Colonic mucosa (tissue), 4 donors: ENCODE measurements at regions of chr7 and their contacts with region 1.

Region 1: GRCh38 chr7:95476904-95477594 is 8.7 kb upstream of the ASB4 start:
- DNase-seq: peak; percentile 74
- H3K4me3 ChIP-seq: no peak overlapping the region
- H3K27ac ChIP-seq: no peak overlapping the region
- H3K4me1 ChIP-seq: no peaks in the 10 kb centered on the region
- H3K27me3 ChIP-seq: no peaks in the 10 kb centered on the region
- CTCF ChIP-seq: peak; percentile 62

Region 2: GRCh38 chr7:95276114-95276513 is 200.9 kb before region 1 on chr7:
- intact Hi-C with region 1: loop called (anchors 10 kb)
- DNase-seq: no peak
- H3K4me3 ChIP-seq: no peak overlapping the region
- H3K27ac ChIP-seq: no peak overlapping the region
- H3K4me1 ChIP-seq: no peaks in the 10 kb centered on the region
- H3K27me3 ChIP-seq: no peaks in the 10 kb centered on the region
- CTCF ChIP-seq: no peak

Region 3: DNA sequence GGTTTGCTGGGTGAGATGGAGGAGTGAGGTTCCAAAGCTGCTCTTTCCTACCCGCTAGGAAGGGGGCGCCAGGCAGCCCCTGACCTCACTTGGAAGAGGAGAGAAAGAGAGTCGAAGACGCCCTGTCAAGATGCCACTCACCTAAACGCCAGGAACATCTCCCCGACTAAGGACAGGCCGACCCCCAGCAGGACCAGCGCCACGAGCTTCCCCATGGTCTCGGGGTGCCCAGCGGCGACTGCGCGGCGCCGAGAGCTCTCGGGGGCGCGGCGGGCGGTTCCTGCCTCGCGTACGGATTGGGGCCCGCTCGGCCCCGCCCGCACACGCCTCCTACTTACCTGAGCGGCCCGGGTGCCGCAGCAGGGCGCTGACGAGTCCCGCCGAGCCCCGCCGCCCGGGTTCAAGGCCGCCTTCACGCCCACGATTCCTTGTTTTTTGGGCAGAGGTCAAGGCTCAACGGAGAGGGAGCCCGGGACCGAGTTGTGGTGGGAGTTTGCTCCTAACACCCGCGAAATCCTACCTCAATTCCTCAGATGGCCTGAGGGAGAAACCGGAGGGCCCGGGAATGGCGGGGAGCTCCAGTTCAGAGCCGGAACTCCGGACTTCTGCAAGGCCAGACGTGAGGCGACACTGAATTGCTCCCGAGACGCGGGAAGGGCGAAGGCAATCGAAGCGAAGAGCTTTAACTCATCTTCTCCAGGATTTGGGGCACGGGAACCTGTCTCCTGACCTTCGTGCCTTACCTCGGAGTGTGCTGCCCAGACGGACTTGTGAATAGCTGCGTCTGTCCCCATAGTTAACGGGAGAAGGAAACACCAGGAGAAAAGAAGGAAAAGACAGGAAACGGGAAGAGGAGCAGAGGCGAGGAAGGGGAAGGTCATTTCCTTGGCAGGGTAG is 80.7 kb before region 1 on chr7 and contains the start of gene PON3:
- intact Hi-C with region 1: loop called (anchors 10 kb)
- DNase-seq: peak; percentile 65
- H3K4me3 ChIP-seq: peak within 1 kb of the TSS; percentile 52
- H3K27ac ChIP-seq: no peak within 1 kb of the TSS
- H3K4me1 ChIP-seq: no peaks in the 10 kb centered on the region
- H3K27me3 ChIP-seq: no peaks in the 10 kb centered on the region
- CTCF ChIP-seq: no peak
- total RNA-seq, gene PON3: 3.0 to 3.5 TPM

Region 4: GRCh38 chr7:95493844-95494243 is 16.8 kb after region 1 on chr7:
- intact Hi-C with region 1: loop called (anchors 1 kb)
- DNase-seq: no peak
- H3K4me3 ChIP-seq: no peak overlapping the region
- H3K27ac ChIP-seq: no peak overlapping the region
- H3K4me1 ChIP-seq: no peaks in the 10 kb centered on the region
- H3K27me3 ChIP-seq: no peaks in the 10 kb centered on the region
- CTCF ChIP-seq: no peak

Region 5: GRCh38 chr7:95577137-95577536 is 100.1 kb after region 1 on chr7:
- intact Hi-C with region 1: no loop called
- DNase-seq: no peak
- H3K4me3 ChIP-seq: no peak overlapping the region
- H3K27ac ChIP-seq: no peak overlapping the region
- H3K4me1 ChIP-seq: no peaks in the 10 kb centered on the region
- H3K27me3 ChIP-seq: no peaks in the 10 kb centered on the region
- CTCF ChIP-seq: no peak